ENCODE measurements at regions of chr19 and their contacts with region 1.

Region 1: GRCh38 chr19:55319785-55320184 is 5.4 kb downstream of the TMEM150B start:
- DNase-seq: peak; percentile 44 to 55
- ATAC-seq: peak; percentile 38 to 89 (median 72)
- H3K4me3 ChIP-seq: no peak overlapping the region
- H3K27ac ChIP-seq: no peak overlapping the region
- H3K4me1 ChIP-seq: peaks cover 0 to 9% (median 0%) of the 10 kb centered on the region in 9 donors
- H3K27me3 ChIP-seq: peaks cover 0 to 14% (median 0%) of the 10 kb centered on the region in 7 donors
- CTCF ChIP-seq: no peak

Region 2: GRCh38 chr19:55275851-55276719 is 43.7 kb before region 1 on chr19:
- intact Hi-C with region 1: no loop called
- DNase-seq: no peak
- ATAC-seq: no peak
- H3K4me3 ChIP-seq: no peak overlapping the region
- H3K27ac ChIP-seq: peak overlapping the region in 1 of 10 donors; percentile 8
- H3K4me1 ChIP-seq: peaks cover 6 to 31% (median 11%) of the 10 kb centered on the region in 9 donors
- H3K27me3 ChIP-seq: no peaks in the 10 kb centered on the region
- CTCF ChIP-seq: no peak

Region 3: GRCh38 chr19:55289117-55289796 is 30.5 kb before region 1 on chr19:
- intact Hi-C with region 1: no loop called
- DNase-seq: no peak
- ATAC-seq: no peak
- H3K4me3 ChIP-seq: no peak overlapping the region
- H3K27ac ChIP-seq: no peak overlapping the region
- H3K4me1 ChIP-seq: peaks cover 0 to 18% (median 4%) of the 10 kb centered on the region in 9 donors
- H3K27me3 ChIP-seq: peaks cover 0 to 3% (median 0%) of the 10 kb centered on the region in 7 donors
- CTCF ChIP-seq: no peak

Region 4: DNA sequence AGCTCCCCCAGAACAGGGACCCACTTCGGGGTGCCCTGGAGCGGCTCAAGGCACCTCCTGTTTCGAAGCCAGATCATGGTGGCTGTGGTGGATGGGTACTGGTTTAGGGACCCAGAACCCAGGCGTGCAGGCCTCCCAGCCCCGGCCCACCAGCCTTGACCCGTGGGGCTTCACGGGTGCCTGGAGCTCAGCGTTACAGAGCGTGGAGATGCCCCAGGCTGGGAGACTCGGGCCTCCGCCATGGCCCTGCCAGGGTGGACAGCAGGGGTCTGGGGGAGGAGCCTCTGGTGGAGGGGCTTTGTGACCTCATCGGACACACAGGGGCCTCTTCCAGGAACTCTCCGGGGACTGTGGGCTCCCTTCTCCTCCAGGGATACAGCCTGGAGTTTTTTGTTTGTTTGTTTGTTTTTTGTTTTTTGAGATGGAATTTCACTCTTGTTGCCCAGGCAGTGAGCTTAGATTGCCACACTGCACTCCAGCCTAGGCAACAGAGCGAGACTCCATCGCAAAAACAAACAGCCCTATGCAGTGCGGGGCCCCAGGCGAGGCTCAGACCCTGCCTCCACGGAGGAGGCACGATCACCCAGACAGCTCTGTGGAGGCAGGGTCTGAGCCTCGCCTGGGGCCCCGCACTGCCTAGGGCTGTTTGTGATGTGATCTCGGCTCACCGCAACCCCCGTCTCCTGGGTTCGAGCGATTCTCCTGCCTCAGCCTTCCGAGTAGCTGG is 43.4 kb after region 1 on chr19 and contains the start of gene GARIN5B:
- intact Hi-C with region 1: loop called in 1 of 10 experiments (anchors 5 kb)
- DNase-seq: no peak
- ATAC-seq: no peak
- H3K4me3 ChIP-seq: no peak within 1 kb of the TSS
- H3K27ac ChIP-seq: no peak within 1 kb of the TSS
- H3K4me1 ChIP-seq: no peaks in the 10 kb centered on the region
- H3K27me3 ChIP-seq: peaks cover 0 to 42% (median 19%) of the 10 kb centered on the region in 7 donors
- CTCF ChIP-seq: no peak
- total RNA-seq, gene GARIN5B: not detected

Measured in heart right ventricle (tissue), 16 donors.